B cell (primary cell): ENCODE measurements at regions of chr6 and their contacts with region 1.

Region 1: GRCh38 chr6:44312901-44313788 is at the start of gene AARS2:
- DNase-seq: peak; percentile 93
- ATAC-seq: peak; percentile 97
- H3K4me3 ChIP-seq: peak within 1 kb of the TSS; percentile 76 to 94 (median 88)
- H3K4me3 Mint-ChIP-seq: peak within 1 kb of the TSS; percentile 94
- H3K27ac ChIP-seq: peak within 1 kb of the TSS; percentile 72 to 86
- H3K27ac Mint-ChIP-seq: peak within 1 kb of the TSS; percentile 92
- H3K4me1 ChIP-seq: peaks cover 7 to 9% of the 10 kb centered on the region in 2 donors
- H3K4me1 Mint-ChIP-seq: peaks cover 17% of the 10 kb centered on the region
- H3K27me3 ChIP-seq: peaks cover 0 to 4% (median under 1%) of the 10 kb centered on the region in 4 experiments
- H3K27me3 Mint-ChIP-seq: peaks cover 2% of the 10 kb centered on the region
- CTCF ChIP-seq: peak; percentile 97
- total RNA-seq, gene AARS2: 21.3 and 22.6 TPM in 2 replicates

Region 2: DNA sequence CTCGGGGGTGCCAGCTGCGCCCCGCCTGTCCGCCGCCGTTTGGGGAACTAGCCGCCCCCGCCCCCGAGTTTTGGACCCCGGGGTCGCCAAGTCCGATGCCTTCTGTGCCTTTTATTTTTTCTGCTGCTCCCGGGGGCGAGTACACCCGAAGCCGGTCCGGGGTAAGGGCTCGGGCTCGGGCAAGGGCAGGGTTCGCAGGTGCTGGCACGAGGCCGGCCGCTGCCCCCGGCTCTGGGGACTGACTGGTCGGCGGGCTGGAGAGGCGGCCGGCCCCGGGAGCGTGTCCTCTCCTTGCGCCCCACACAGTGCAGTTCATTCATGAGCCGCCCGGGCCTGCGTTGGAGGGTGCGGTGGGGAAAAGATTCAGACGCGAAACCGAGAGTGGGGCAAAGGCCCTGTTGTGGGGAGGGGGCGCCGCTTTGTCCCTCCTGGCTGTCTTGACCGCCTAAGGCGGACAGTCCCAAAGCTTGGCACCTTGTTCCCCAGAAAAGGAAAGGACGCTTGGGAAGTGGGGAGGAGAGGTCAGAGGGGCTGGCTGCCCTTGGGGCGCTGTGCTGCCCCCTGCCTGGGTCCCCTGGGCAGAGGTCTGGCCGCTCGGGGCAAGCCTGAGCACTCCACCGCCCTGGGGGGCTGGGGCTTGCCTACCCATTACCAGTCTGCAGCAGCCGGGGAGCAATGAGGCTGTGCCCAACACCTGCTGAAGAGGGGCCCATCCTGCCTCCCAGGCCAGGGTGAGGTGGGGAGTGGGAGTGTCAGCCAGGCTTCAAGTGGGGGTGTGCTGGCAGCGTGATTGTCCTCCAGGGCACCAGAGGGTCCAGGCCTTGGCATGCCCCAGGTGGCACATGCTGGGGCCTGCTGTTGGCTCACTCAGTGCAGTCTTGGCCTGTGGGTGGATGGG is 184.9 kb before region 1 on chr6:
- CTCF ChIA-PET with region 1: no interaction called
- POLR2A ChIA-PET with region 1: no interaction called
- intact Hi-C with region 1: no loop called
- DNase-seq: no peak
- ATAC-seq: peak; percentile 8
- H3K4me3 ChIP-seq: peak overlapping the region in 4 of 5 experiments; percentile 65 to 98 (median 87)
- H3K4me3 Mint-ChIP-seq: peak overlapping the region; percentile 81
- H3K27ac ChIP-seq: peak overlapping the region in 1 of 2 donors; percentile 60
- H3K27ac Mint-ChIP-seq: peak overlapping the region; percentile 68
- H3K4me1 ChIP-seq: peaks cover 27 to 42% of the 10 kb centered on the region in 2 donors
- H3K4me1 Mint-ChIP-seq: peaks cover 47% of the 10 kb centered on the region
- H3K27me3 ChIP-seq: no peaks in the 10 kb centered on the region
- H3K27me3 Mint-ChIP-seq: no peaks in the 10 kb centered on the region
- CTCF ChIP-seq: no peak

Region 3: DNA sequence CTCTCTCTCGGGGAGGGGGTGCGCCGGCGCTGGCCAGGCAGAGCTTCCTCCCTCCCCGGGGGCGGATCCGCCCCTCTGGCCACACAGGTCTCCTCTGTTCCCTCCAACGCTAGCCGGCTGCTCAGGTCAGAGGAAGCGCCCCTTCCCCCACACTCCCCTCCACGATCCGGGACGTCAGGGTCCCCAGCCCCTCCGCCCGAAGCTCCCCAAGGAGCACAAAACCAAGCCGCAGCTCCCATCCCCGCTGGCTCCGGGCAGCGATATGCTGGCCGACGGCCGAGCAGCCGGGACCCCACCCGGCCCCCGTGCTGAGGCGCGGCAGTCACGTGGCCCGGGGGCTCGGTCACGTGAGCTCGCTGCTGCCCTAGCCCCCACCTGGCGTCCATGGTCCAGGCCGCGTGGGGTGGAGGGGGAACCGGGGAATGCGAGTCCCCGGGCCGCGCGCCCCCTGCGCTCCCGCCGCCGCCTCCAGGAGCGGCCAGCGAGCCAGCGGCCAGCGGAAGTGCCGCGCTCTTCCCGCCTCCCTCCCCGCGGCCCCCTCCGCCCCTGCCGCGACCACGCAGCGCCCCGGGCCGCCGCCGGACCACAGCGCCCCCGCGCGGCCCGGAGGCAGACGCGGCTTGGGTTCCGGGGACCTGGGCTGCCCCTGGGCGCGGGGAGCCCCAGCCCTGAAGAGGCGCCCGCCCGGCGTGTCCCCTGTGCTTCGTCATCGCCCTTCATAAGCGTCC is 56.0 kb before region 1 on chr6 and contains the start of gene SLC35B2:
- CTCF ChIA-PET with region 1: interaction called, 14 read pairs
- POLR2A ChIA-PET with region 1: no interaction called
- intact Hi-C with region 1: no loop called
- DNase-seq: peak; percentile 87
- ATAC-seq: peak; percentile 64
- H3K4me3 ChIP-seq: peak within 1 kb of the TSS; percentile 35 to 93 (median 90)
- H3K4me3 Mint-ChIP-seq: peak within 1 kb of the TSS; percentile 88
- H3K27ac ChIP-seq: peak within 1 kb of the TSS; percentile 83 to 98
- H3K27ac Mint-ChIP-seq: peak within 1 kb of the TSS; percentile 100
- H3K4me1 ChIP-seq: peaks cover 57 to 81% of the 10 kb centered on the region in 2 donors
- H3K4me1 Mint-ChIP-seq: peaks cover 89% of the 10 kb centered on the region
- H3K27me3 ChIP-seq: no peaks in the 10 kb centered on the region
- H3K27me3 Mint-ChIP-seq: no peaks in the 10 kb centered on the region
- CTCF ChIP-seq: peak; percentile 75
- total RNA-seq, gene SLC35B2: 29.2 and 30.0 TPM in 2 replicates

Region 4: DNA sequence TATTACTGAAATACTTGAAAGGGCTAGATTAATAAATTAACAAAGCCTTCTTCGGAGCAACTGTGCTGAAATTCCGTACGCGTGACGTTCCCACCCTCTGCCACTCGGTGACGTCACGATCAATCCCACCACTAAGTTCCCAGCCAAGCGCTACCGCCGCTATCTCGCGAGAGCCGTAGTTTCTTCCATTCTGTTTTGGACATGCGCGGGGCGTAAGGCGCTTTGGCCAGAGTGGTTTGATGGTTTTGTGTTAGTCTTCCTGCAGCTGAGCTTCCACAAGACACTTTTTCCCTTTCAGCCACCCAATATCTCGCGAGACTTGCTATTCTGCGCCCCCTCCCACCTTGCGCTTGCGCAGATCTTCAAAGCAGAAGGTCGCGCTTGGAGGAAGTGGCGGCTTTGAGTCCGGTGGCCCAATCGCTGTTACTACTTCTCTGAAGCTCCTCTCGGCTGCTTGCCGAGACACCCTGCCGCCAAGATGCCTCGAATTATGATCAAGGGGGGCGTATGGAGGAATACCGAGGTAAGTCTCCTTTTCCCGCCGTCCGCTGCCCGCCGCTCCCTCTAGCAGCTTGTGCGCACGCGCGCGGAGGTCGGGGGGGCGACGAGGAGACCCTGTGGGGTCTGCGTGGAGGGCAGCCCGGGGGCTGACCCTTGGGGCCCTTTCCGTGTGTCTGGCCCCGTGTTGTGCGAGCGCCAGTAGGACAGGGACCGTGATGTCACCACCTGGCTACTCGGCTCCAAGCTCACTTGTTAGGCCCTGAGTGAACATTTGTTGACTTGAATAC is 74.4 kb after region 1 on chr6 and contains the start of gene CDC5L:
- CTCF ChIA-PET with region 1: interaction called, 3 read pairs
- POLR2A ChIA-PET with region 1: no interaction called
- intact Hi-C with region 1: loop called (anchors 1 kb)
- DNase-seq: peak; percentile 98
- ATAC-seq: peak; percentile 89
- H3K4me3 ChIP-seq: peak within 1 kb of the TSS; percentile 69 to 98 (median 93)
- H3K4me3 Mint-ChIP-seq: peak within 1 kb of the TSS; percentile 100
- H3K27ac ChIP-seq: peak within 1 kb of the TSS; percentile 83 to 93
- H3K27ac Mint-ChIP-seq: peak within 1 kb of the TSS; percentile 99
- H3K4me1 ChIP-seq: peaks cover 20 to 21% of the 10 kb centered on the region in 2 donors
- H3K4me1 Mint-ChIP-seq: peaks cover 38% of the 10 kb centered on the region
- H3K27me3 ChIP-seq: no peaks in the 10 kb centered on the region
- H3K27me3 Mint-ChIP-seq: no peaks in the 10 kb centered on the region
- CTCF ChIP-seq: no peak
- total RNA-seq, gene CDC5L: 22.2 and 22.5 TPM in 2 replicates